Natural killer cell (primary cell): ENCODE measurements at regions of chr19 and their contacts with region 1.

Region 1: GRCh38 chr19:11924886-11925650 is at the start of gene ZNF700:
- DNase-seq: peak; percentile 85 to 95
- ATAC-seq: peak; percentile 88 to 96 (median 91)
- H3K4me3 ChIP-seq: peak within 1 kb of the TSS; percentile 69
- H3K4me3 Mint-ChIP-seq: peak within 1 kb of the TSS; percentile 97
- H3K27ac ChIP-seq: peak within 1 kb of the TSS; percentile 84
- H3K27ac Mint-ChIP-seq: peak within 1 kb of the TSS; percentile 97 to 99
- H3K4me1 ChIP-seq: peaks cover 30% of the 10 kb centered on the region
- H3K4me1 Mint-ChIP-seq: peaks cover 50 to 54% of the 10 kb centered on the region in 2 donors
- H3K27me3 ChIP-seq: no peaks in the 10 kb centered on the region
- H3K27me3 Mint-ChIP-seq: peaks cover 0 to 4% of the 10 kb centered on the region in 2 donors
- CTCF ChIP-seq: no peak
- total RNA-seq, gene ZNF700: 25.1 to 30.1 (median 26.4) TPM

Region 2: DNA sequence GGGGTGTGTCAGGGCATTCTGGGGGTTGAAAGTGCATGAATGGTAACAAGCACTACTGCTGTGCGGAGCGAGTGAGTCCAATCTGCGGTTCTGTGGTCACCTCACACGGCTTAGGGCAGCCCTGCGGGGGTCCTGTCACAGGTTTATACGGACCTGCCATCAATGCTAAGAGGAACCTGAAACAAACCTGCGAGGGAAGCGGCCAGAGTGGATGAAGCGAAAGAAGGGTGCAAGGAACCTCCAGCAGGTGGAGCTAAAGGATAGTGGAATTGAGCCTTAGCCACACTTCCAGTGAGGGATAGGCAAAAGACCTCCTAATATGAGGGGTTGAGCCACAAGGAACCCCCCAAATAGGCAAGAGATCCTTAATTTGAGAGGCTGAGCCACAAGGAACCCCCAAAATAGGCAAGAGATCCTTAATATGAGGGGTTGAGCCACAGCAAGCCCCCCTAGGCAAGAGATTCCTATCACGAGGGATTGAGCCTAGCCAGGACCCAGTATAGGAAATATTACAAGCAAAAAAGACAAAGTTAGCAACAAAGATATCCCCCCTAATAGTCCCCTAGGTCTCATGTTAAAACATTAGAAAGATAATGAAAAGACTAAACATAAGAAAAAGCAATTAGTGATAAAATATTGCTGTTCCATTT is 43.8 kb before region 1 on chr19:
- intact Hi-C with region 1: loop called (anchors 2 kb)
- DNase-seq: peak; percentile 43 to 84
- ATAC-seq: peak; percentile 59 to 84 (median 82)
- H3K4me3 ChIP-seq: no peak overlapping the region
- H3K4me3 Mint-ChIP-seq: no peak overlapping the region
- H3K27ac ChIP-seq: no peak overlapping the region
- H3K27ac Mint-ChIP-seq: no peak overlapping the region
- H3K4me1 ChIP-seq: peaks cover 3% of the 10 kb centered on the region
- H3K4me1 Mint-ChIP-seq: peaks cover 5 to 8% of the 10 kb centered on the region in 2 donors
- H3K27me3 ChIP-seq: no peaks in the 10 kb centered on the region
- H3K27me3 Mint-ChIP-seq: peaks cover 0 to 8% of the 10 kb centered on the region in 2 donors
- CTCF ChIP-seq: peak; percentile 73

Region 3: GRCh38 chr19:11949201-11949600 is 24.1 kb after region 1 on chr19:
- intact Hi-C with region 1: no loop called
- DNase-seq: no peak
- ATAC-seq: no peak
- H3K4me3 ChIP-seq: no peak overlapping the region
- H3K4me3 Mint-ChIP-seq: no peak overlapping the region
- H3K27ac ChIP-seq: no peak overlapping the region
- H3K27ac Mint-ChIP-seq: peak overlapping the region in 1 of 2 donors; percentile 14
- H3K4me1 ChIP-seq: no peaks in the 10 kb centered on the region
- H3K4me1 Mint-ChIP-seq: peaks cover 0 to 6% of the 10 kb centered on the region in 2 donors
- H3K27me3 ChIP-seq: no peaks in the 10 kb centered on the region
- H3K27me3 Mint-ChIP-seq: no peaks in the 10 kb centered on the region
- CTCF ChIP-seq: no peak

Region 4: DNA sequence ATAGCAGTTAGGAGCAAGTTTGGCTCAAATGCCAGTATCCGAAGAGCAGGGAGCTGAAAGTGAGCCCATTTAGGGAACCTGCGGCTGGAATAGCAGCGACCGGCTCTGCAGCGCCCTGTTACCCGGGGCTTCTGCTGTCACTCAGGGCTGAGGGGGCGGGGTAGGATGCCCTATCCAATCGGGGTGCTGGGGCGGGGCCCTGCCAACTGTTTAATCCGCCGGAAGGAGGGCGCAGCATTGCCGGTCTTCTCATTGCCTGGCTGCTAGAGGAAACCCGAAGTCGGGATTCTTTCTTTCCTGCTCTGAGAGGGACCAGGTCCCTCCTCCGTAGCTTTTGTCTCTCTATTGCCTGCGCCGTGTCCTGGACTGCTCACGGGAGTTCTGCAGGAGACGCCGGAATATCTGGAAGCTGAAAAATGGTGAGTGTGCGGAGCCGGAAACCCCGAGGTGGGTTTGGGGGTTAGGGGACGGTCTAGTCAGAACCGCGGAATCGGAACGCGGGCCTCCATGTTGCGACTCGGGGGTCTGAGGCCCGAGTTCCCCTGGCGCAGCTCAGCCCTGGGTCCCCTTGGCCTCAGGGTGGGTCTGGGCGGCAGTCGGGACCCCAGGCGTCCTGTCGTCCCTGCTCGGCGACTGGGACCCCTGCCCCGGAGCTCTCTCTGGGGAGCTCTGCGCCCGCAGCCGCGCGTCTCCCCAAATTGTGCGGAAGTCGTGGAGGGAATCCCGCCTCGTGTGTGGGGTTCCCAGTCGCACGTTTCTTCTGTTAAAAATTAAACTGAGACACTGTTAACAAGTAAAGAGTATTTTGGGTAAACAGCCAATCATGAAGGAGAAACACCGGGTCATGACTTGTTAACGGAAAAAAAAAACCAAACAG is 62.6 kb after region 1 on chr19:
- intact Hi-C with region 1: loop called (anchors 1 kb)
- DNase-seq: peak; percentile 88 to 93
- ATAC-seq: peak; percentile 93 to 96 (median 93)
- H3K4me3 ChIP-seq: peak overlapping the region; percentile 99
- H3K4me3 Mint-ChIP-seq: peak overlapping the region; percentile 97
- H3K27ac ChIP-seq: peak overlapping the region; percentile 89
- H3K27ac Mint-ChIP-seq: peak overlapping the region; percentile 94 to 95
- H3K4me1 ChIP-seq: peaks cover 23% of the 10 kb centered on the region
- H3K4me1 Mint-ChIP-seq: peaks cover 34 to 36% of the 10 kb centered on the region in 2 donors
- H3K27me3 ChIP-seq: no peaks in the 10 kb centered on the region
- H3K27me3 Mint-ChIP-seq: no peaks in the 10 kb centered on the region
- CTCF ChIP-seq: no peak

Region 5: GRCh38 chr19:12139885-12140547 is 214.9 kb after region 1 on chr19 and contains the start of gene ZNF20:
- intact Hi-C with region 1: loop called (anchors 1 kb)
- DNase-seq: peak; percentile 90 to 92
- ATAC-seq: peak; percentile 95 to 98 (median 96)
- H3K4me3 ChIP-seq: peak within 1 kb of the TSS; percentile 76
- H3K4me3 Mint-ChIP-seq: peak within 1 kb of the TSS; percentile 95
- H3K27ac ChIP-seq: peak within 1 kb of the TSS; percentile 56
- H3K27ac Mint-ChIP-seq: peak within 1 kb of the TSS; percentile 79 to 90
- H3K4me1 ChIP-seq: peaks cover 27% of the 10 kb centered on the region
- H3K4me1 Mint-ChIP-seq: peaks cover 35 to 38% of the 10 kb centered on the region in 2 donors
- H3K27me3 ChIP-seq: no peaks in the 10 kb centered on the region
- H3K27me3 Mint-ChIP-seq: no peaks in the 10 kb centered on the region
- CTCF ChIP-seq: no peak
- total RNA-seq, gene ZNF20: 4.2 to 9.0 (median 4.6) TPM